ENCODE measurements at regions of chr12 and their contacts with region 1.

Region 1: GRCh38 chr12:113048716-113049127 is 7.8 kb upstream of the DTX1 start:
- DNase-seq: peak; percentile 60
- H3K4me3 ChIP-seq: no peak overlapping the region
- H3K27ac ChIP-seq: no peak overlapping the region
- H3K27me3 ChIP-seq: no peaks in the 10 kb centered on the region
- CTCF ChIP-seq: peak; percentile 78

Region 2: GRCh38 chr12:113152835-113153814 is 104.4 kb after region 1 on chr12:
- in situ Hi-C with region 1: loop called (anchors 25 kb)
- DNase-seq: peak; percentile 45
- H3K4me3 ChIP-seq: peak overlapping the region; percentile 39
- H3K27ac ChIP-seq: no peak overlapping the region
- H3K27me3 ChIP-seq: peaks cover 17% of the 10 kb centered on the region
- CTCF ChIP-seq: peak; percentile 59

Measured in brain microvascular endothelial cell (primary cell).